ENCODE measurements at regions of chr13 and their contacts with region 1.

Region 1: GRCh38 chr13:108227651-108228272 is 9.6 kb downstream of the ABHD13 start:
- DNase-seq: peak; percentile 62
- ATAC-seq: peak; percentile 58
- H3K4me3 ChIP-seq: no peak overlapping the region
- H3K4me3 Mint-ChIP-seq: no peak overlapping the region
- H3K27ac ChIP-seq: no peak overlapping the region
- H3K27ac Mint-ChIP-seq: no peak overlapping the region
- H3K4me1 ChIP-seq: peaks cover 16 to 22% of the 10 kb centered on the region in 2 donors
- H3K4me1 Mint-ChIP-seq: peaks cover 49% of the 10 kb centered on the region
- H3K27me3 ChIP-seq: no peaks in the 10 kb centered on the region
- H3K27me3 Mint-ChIP-seq: no peaks in the 10 kb centered on the region
- CTCF ChIP-seq: peak; percentile 93

Region 2: GRCh38 chr13:106567474-106568298 is 1660.1 kb before region 1 on chr13 and contains the start of gene ARGLU1:
- CTCF ChIA-PET with region 1: no interaction called
- POLR2A ChIA-PET with region 1: no interaction called
- intact Hi-C with region 1: loop called (anchors 5 kb)
- DNase-seq: peak; percentile 96
- ATAC-seq: peak; percentile 84
- H3K4me3 ChIP-seq: peak within 1 kb of the TSS; percentile 82 to 98 (median 96)
- H3K4me3 Mint-ChIP-seq: peak within 1 kb of the TSS; percentile 90
- H3K27ac ChIP-seq: peak within 1 kb of the TSS; percentile 87 to 97
- H3K27ac Mint-ChIP-seq: peak within 1 kb of the TSS; percentile 95
- H3K4me1 ChIP-seq: peaks cover 51 to 52% of the 10 kb centered on the region in 2 donors
- H3K4me1 Mint-ChIP-seq: peaks cover 52% of the 10 kb centered on the region
- H3K27me3 ChIP-seq: no peaks in the 10 kb centered on the region
- H3K27me3 Mint-ChIP-seq: no peaks in the 10 kb centered on the region
- CTCF ChIP-seq: no peak
- total RNA-seq, gene ARGLU1: 245 and 261 TPM in 2 replicates

Region 3: DNA sequence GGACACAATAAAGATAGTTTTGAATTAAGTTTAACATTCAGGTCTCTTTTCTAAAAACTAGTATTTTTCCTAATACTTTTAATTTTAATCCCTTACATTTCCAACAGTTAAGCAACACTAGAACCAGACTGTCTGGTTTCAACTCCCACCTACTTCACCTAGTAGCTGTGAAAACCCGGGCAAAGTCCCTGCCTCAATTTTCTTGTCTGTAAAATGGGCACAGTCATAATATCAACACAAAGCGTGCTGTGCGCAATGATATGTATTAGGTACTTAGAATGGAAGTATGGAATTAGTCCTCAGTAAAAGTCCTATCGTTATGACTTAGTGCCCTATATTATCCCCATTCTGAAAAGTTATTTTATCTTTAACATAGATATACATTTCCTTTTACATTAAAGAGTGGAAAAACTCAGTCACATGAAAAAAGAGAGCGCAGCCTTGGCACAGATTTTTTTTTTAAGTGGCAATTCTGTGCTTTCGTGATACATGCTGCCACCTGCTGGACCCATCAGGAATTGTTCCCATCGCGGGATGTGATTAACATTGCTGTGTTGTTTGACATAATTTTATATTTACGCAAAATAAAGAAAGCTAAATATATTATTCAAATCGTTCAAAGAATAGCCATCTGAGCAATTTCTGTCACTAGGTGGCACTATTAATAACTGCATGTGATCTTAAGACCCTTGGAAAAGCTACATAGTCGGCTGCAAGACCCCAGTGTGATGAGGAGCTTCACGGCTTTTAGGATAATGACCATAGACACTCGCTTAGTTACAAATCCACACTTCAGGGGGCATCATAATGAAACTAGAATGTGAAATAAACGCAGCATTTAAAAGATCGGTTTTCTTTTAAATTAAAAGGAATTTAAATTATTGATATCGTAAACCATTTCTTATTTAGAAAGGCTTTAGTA is 72.3 kb before region 1 on chr13:
- CTCF ChIA-PET with region 1: interaction called, 11 read pairs
- POLR2A ChIA-PET with region 1: no interaction called
- intact Hi-C with region 1: no loop called
- DNase-seq: peak; percentile 65
- ATAC-seq: peak; percentile 51
- H3K4me3 ChIP-seq: no peak overlapping the region
- H3K4me3 Mint-ChIP-seq: no peak overlapping the region
- H3K27ac ChIP-seq: no peak overlapping the region
- H3K27ac Mint-ChIP-seq: no peak overlapping the region
- H3K4me1 ChIP-seq: no peaks in the 10 kb centered on the region
- H3K4me1 Mint-ChIP-seq: no peaks in the 10 kb centered on the region
- H3K27me3 ChIP-seq: peaks cover 0 to 2% (median 0%) of the 10 kb centered on the region in 4 experiments
- H3K27me3 Mint-ChIP-seq: peaks cover 19% of the 10 kb centered on the region
- CTCF ChIP-seq: peak; percentile 98

Region 4: GRCh38 chr13:108210551-108210950 is 17.2 kb before region 1 on chr13:
- CTCF ChIA-PET with region 1: interaction called, 4 read pairs
- POLR2A ChIA-PET with region 1: no interaction called
- intact Hi-C with region 1: loop called (anchors 2 kb)
- DNase-seq: no peak
- ATAC-seq: no peak
- H3K4me3 ChIP-seq: no peak overlapping the region
- H3K4me3 Mint-ChIP-seq: no peak overlapping the region
- H3K27ac ChIP-seq: no peak overlapping the region
- H3K27ac Mint-ChIP-seq: no peak overlapping the region
- H3K4me1 ChIP-seq: peaks cover 26 to 28% of the 10 kb centered on the region in 2 donors
- H3K4me1 Mint-ChIP-seq: peaks cover 34% of the 10 kb centered on the region
- H3K27me3 ChIP-seq: no peaks in the 10 kb centered on the region
- H3K27me3 Mint-ChIP-seq: no peaks in the 10 kb centered on the region
- CTCF ChIP-seq: no peak

Region 5: DNA sequence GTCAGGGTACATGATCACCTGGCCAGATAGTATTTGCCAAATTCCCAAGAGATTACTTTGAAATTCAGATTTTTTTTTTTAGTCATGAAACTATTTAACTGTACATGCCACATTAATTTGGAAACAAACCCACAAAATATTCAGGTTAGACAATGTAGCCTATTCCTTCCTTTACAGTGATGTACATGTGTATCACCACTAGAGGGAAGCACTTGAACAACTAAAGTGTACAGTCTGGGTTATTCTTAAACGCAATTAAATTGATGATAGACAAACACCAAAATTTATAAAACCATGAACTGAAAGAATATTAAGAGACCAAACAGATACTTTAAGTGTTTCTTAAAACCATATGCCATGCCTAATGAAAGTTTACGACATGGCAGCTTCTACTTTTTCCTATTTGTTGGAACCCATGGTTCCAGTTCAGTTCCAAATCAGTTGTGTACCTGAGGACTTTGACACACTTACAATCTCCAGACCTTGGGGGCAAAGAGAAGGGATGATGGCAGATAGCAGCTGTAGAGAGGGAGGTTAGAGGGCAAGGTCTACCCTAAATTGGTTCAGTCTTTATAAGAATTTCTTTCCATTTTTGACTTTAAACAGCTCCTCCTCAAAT is 94.6 kb after region 1 on chr13:
- CTCF ChIA-PET with region 1: interaction called, 4 read pairs
- POLR2A ChIA-PET with region 1: no interaction called
- intact Hi-C with region 1: loop called (anchors 5 kb)
- DNase-seq: peak; percentile 48
- ATAC-seq: peak; percentile 53
- H3K4me3 ChIP-seq: no peak overlapping the region
- H3K4me3 Mint-ChIP-seq: no peak overlapping the region
- H3K27ac ChIP-seq: no peak overlapping the region
- H3K27ac Mint-ChIP-seq: no peak overlapping the region
- H3K4me1 ChIP-seq: peaks cover 12 to 18% of the 10 kb centered on the region in 2 donors
- H3K4me1 Mint-ChIP-seq: peaks cover 18% of the 10 kb centered on the region
- H3K27me3 ChIP-seq: no peaks in the 10 kb centered on the region
- H3K27me3 Mint-ChIP-seq: peaks cover 4% of the 10 kb centered on the region
- CTCF ChIP-seq: peak; percentile 93

Region 6: GRCh38 chr13:108895220-108895704 is 667.5 kb after region 1 on chr13:
- CTCF ChIA-PET with region 1: no interaction called
- POLR2A ChIA-PET with region 1: no interaction called
- intact Hi-C with region 1: loop called (anchors 2 kb)
- DNase-seq: peak; percentile 23
- ATAC-seq: no peak
- H3K4me3 ChIP-seq: no peak overlapping the region
- H3K4me3 Mint-ChIP-seq: no peak overlapping the region
- H3K27ac ChIP-seq: no peak overlapping the region
- H3K27ac Mint-ChIP-seq: no peak overlapping the region
- H3K4me1 ChIP-seq: no peaks in the 10 kb centered on the region
- H3K4me1 Mint-ChIP-seq: peaks cover 2% of the 10 kb centered on the region
- H3K27me3 ChIP-seq: peaks cover 0 to 4% (median 0%) of the 10 kb centered on the region in 4 experiments
- H3K27me3 Mint-ChIP-seq: peaks cover 11% of the 10 kb centered on the region
- CTCF ChIP-seq: peak; percentile 79

Region 7: DNA sequence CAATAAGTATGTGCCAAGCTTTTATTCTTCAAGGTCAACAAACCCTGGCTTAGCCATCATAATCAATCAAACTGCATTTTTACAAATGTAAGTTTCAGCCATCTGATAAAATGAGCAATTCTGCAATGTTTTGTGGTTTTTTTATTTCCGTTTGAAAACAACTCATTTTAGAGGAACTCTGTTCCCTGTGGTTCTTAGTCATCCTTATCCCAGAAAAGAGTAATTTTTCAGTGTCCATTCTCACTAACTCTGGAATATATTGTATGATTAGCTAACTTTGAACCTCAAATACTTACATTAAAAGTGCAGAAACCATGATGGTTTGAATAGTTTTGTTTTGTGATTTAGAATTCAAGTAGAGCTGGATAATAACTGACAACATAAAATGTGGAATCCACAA is 1471.0 kb after region 1 on chr13:
- CTCF ChIA-PET with region 1: no interaction called
- POLR2A ChIA-PET with region 1: no interaction called
- intact Hi-C with region 1: no loop called
- DNase-seq: no peak
- ATAC-seq: no peak
- H3K4me3 ChIP-seq: no peak overlapping the region
- H3K4me3 Mint-ChIP-seq: no peak overlapping the region
- H3K27ac ChIP-seq: no peak overlapping the region
- H3K27ac Mint-ChIP-seq: no peak overlapping the region
- H3K4me1 ChIP-seq: peaks cover 5% of the 10 kb centered on the region in 2 donors
- H3K4me1 Mint-ChIP-seq: no peaks in the 10 kb centered on the region
- H3K27me3 ChIP-seq: no peaks in the 10 kb centered on the region
- H3K27me3 Mint-ChIP-seq: peaks cover 8% of the 10 kb centered on the region
- CTCF ChIP-seq: no peak